CD4-positive, alpha-beta T cell (primary cell): ENCODE measurements at regions of chr1 and their contacts with region 1.

Region 1: DNA sequence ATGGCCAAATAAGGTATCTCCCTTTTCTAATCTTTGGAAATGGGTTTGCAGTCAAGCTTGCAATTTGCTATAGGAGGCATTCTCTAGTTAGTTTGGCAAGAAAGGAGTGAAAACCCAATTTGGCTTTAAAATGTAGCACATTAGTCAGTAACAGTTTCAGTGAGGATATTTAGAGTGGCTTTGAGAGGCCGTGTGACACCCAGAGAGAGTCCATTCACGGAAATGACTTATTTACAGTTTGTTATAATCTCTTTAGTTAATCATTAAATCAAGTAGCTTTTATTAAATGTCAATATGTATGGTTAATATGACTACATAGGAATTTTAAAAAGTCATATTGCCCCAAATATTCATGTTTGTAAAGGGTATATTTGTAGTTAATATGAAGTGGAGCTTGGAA is 9.6 kb downstream of the ZBTB18 start:
- DNase-seq: no peak
- ATAC-seq: no peak
- H3K4me3 ChIP-seq: no peak overlapping the region
- H3K4me3 Mint-ChIP-seq: no peak overlapping the region
- H3K27ac ChIP-seq: no peak overlapping the region
- H3K27ac Mint-ChIP-seq: no peak overlapping the region
- H3K4me1 ChIP-seq: no peaks in the 10 kb centered on the region
- H3K4me1 Mint-ChIP-seq: peaks cover 18% of the 10 kb centered on the region
- H3K27me3 ChIP-seq: no peaks in the 10 kb centered on the region
- H3K27me3 Mint-ChIP-seq: no peaks in the 10 kb centered on the region
- CTCF ChIP-seq: no peak

Region 2: GRCh38 chr1:243926803-243927279 is 133.8 kb before region 1 on chr1:
- CTCF ChIA-PET with region 1: no interaction called
- POLR2A ChIA-PET with region 1: no interaction called
- intact Hi-C with region 1: no loop called
- DNase-seq: no peak
- ATAC-seq: no peak
- H3K4me3 ChIP-seq: no peak overlapping the region
- H3K4me3 Mint-ChIP-seq: no peak overlapping the region
- H3K27ac ChIP-seq: no peak overlapping the region
- H3K27ac Mint-ChIP-seq: no peak overlapping the region
- H3K4me1 ChIP-seq: no peaks in the 10 kb centered on the region
- H3K4me1 Mint-ChIP-seq: no peaks in the 10 kb centered on the region
- H3K27me3 ChIP-seq: peaks cover 0 to 5% of the 10 kb centered on the region in 2 experiments
- H3K27me3 Mint-ChIP-seq: peaks cover 27% of the 10 kb centered on the region
- CTCF ChIP-seq: no peak

Region 3: DNA sequence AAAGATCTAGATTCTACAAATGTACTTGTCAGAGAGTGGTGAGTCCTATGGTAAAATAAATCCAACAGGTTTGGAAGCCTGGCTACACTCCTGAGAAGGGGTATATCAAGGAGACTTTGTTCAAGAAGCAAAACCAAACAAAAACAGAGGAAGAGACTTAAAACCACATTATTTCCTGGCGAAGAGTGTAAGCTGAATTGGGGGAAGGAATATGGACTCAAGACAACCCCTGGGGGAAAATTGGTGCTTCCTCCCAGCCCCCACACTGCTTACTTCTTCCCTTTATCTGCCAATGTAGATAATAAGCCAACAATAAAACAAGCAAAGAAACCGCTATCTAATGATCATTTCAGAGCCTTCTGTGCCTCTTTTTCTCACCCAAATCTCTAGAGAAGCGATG is 58.0 kb before region 1 on chr1:
- CTCF ChIA-PET with region 1: no interaction called
- POLR2A ChIA-PET with region 1: no interaction called
- intact Hi-C with region 1: no loop called
- DNase-seq: peak in 1 of 14 experiments; percentile 12
- ATAC-seq: no peak
- H3K4me3 ChIP-seq: no peak overlapping the region
- H3K4me3 Mint-ChIP-seq: peak overlapping the region; percentile 22
- H3K27ac ChIP-seq: no peak overlapping the region
- H3K27ac Mint-ChIP-seq: peak overlapping the region; percentile 3
- H3K4me1 ChIP-seq: peaks cover 17% of the 10 kb centered on the region
- H3K4me1 Mint-ChIP-seq: peaks cover 22% of the 10 kb centered on the region
- H3K27me3 ChIP-seq: no peaks in the 10 kb centered on the region
- H3K27me3 Mint-ChIP-seq: no peaks in the 10 kb centered on the region
- CTCF ChIP-seq: no peak

Region 4: DNA sequence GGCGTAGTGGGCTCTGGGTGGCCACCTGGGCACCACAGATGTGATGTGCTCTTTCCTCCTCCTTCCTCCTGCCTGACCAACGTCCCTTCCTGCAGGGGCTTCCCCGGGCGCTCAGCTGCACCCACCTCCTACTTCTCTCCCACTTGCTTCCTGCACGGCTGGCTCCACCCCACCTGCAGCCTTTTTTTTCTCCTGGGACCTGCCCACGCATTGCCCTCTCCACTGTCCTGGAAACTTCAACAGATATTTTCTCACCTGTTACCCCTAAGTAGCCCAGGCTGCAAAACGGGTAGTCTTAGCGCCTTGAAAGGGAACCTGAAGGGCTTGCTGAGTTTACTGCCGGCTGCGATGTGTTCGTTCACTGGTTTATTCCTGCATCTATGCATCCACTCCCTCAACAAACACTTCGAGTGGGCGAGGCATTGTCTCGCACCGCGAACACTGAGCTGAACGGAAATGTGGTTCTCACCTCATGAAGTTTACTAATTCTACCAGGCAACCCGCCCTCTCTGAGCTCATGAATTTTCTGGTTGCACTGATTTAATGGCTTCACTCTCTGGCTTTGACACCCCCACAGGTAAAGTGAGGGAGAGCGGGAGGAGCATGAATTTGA is 14.0 kb after region 1 on chr1:
- CTCF ChIA-PET with region 1: interaction called, 16 read pairs
- POLR2A ChIA-PET with region 1: interaction called, 283 read pairs
- intact Hi-C with region 1: no loop called
- DNase-seq: peak; percentile 56 to 89 (median 68)
- ATAC-seq: peak; percentile 93
- H3K4me3 ChIP-seq: peak overlapping the region; percentile 52
- H3K4me3 Mint-ChIP-seq: peak overlapping the region; percentile 89
- H3K27ac ChIP-seq: peak overlapping the region; percentile 58 to 67
- H3K27ac Mint-ChIP-seq: peak overlapping the region; percentile 98
- H3K4me1 ChIP-seq: peaks cover 39% of the 10 kb centered on the region
- H3K4me1 Mint-ChIP-seq: peaks cover 54% of the 10 kb centered on the region
- H3K27me3 ChIP-seq: no peaks in the 10 kb centered on the region
- H3K27me3 Mint-ChIP-seq: no peaks in the 10 kb centered on the region
- CTCF ChIP-seq: no peak